HCT116 (cell line): ENCODE measurements at regions of chr16 and their contacts with region 1.

Region 1: DNA sequence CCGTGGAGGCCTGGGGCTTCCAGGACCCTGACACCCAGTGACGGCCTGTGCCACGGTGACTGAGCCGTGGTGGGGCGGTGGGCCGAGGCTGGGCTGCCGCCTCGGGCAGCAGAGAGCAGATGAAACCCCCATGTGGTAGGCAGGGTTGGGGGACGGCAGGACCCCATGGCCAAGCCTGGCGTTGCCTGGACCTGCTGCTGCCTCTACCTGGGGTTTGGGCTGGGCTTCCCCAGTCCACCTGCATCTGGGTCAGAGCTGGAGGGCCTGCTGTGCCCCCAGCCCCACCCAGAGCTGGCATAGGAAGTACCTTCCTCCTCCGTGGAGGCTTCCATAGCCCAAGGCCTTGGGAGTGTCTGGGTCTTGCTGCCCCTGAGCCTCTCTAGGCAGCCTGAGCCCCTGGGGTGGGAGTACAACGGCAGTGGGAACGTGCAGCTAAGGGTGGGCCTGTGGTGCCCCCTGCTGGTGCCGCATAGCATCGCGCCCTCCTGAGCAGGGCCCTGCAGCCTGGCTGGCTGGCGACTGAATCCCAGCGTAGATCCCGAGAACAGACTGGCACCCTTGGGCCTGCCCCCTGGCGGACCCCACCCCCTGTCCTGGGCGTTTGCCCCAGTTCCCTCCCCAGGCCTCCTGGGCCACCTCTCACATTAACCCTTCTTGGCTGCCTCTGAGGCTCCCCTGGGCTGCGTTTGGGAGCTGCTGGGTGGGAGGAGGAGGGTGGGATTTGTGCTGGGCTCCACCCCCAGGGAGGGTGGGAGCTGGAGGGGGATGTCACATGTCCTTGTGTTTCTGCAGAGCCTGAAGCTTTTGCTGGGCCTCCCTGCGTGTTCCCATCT is 12.6 kb upstream of the ATP6V0C start:
- DNase-seq: no peak
- ATAC-seq: peak; percentile 95
- H3K4me3 ChIP-seq: no peak overlapping the region
- H3K27ac ChIP-seq: no peak overlapping the region; the same call in 1 of the 2 replicates
- H3K4me1 ChIP-seq: peaks cover 3 to 12% of the 10 kb centered on the region in 2 experiments; a peak in 3 of 4 replicates
- H3K27me3 ChIP-seq: no peaks in the 10 kb centered on the region
- CTCF ChIP-seq: peak; percentile 85 to 97 (median 95); a peak in 5 of 6 replicates
- POLR2A ChIP-seq: no peak
- RAD21 ChIP-seq: peak; percentile 97

Region 2: DNA sequence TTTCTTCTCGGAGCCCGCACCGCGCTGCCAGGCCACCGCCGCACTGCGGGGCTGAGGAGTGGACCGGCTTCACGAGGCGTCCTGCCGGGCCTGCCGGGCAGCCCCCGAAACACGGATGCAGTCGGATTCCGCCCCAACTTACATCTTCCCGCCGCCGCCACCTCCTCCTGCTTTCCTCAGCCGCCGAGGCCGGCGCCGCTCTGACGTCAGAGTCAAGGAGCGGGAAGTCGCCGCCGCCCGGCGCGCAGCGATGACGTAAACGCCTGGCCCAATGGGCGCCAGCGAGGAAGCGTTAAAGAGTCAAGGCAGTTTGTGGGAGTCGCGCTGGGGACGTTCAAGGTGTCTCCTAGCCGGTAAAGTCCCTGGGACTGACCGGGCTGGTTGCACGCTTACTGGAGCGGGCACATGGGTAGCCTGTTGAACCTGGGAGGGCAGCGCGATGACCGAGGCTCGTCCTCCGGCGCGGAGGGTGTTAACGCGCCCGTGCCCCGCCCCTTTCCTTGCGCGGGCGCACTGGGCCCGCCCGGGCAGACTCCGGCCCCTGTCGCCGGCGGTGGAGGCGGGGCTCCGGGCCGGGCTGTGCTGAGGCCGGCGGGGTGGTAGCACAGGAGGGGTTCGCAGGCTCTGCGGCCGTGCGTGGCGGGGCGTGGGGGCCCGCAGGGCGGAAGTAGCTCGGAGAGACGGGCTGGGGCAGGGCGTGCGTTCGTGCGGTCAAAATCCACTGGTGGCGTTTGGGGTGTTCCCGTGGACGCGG is 233.0 kb before region 1 on chr16 and contains the start of gene RNPS1:
- CTCF ChIA-PET with region 1: interaction called, 5 read pairs
- POLR2A ChIA-PET with region 1: no interaction called
- RAD21 ChIA-PET with region 1: no interaction called
- intact Hi-C with region 1: loop called (anchors 10 kb)
- DNase-seq: peak; percentile 93
- ATAC-seq: peak; percentile 92
- H3K4me3 ChIP-seq: peak within 1 kb of the TSS; percentile 81 to 90
- H3K27ac ChIP-seq: peak within 1 kb of the TSS; percentile 91
- H3K4me1 ChIP-seq: peaks cover 15 to 21% of the 10 kb centered on the region in 2 experiments; a peak in 3 of 4 replicates
- H3K27me3 ChIP-seq: no peaks in the 10 kb centered on the region
- CTCF ChIP-seq: no peak
- POLR2A ChIP-seq: peak; percentile 59
- RAD21 ChIP-seq: no peak
- total RNA-seq, gene RNPS1: 257 TPM

Region 3: DNA sequence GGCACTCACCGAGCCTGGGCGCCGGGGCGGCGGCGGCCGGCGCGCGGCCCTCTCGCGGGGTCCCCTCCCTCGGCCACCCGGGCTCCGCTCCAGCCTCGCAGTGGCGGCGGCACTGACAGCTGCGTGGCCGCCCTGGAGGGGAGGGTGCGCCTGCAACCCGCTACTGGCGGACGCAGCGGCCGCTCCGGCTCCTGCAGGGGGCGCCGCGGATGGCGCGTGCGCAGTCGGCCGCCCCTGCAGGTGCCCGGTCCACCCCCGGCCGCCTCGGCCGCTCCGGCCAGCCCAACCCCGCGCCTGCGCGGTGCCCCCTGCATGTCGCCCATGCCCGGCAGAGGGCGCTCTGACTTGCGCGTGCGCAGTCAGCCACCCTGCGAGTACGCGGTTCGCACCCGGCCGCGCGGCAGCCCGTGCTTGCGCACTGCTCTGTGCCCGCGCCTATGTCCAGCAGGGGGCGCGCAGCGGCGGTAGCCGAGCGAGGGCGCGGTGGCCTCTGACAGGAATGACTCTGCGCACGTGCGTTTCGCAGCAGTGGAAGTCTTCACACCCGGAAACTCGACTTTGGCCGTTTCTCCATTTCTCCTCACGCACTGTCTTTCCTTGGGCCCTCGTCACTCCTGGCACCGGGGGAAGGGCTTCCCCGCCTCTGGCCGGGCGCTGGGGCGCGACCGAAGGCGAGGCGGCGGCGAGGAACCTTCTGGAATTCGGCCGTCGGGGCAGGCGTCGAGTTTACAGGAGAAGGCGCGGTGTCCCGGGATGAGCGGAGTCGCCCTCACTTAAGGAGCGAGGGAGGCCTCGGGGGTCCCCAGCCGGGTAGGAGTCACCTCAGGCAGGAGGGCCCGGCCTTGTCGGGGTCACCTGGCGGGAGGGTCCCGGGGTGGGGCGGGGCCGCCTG is 160.3 kb before region 1 on chr16 and contains the start of gene ABCA3:
- CTCF ChIA-PET with region 1: no interaction called
- POLR2A ChIA-PET with region 1: no interaction called
- RAD21 ChIA-PET with region 1: no interaction called
- intact Hi-C with region 1: loop called (anchors 5 kb)
- DNase-seq: peak; percentile 87
- ATAC-seq: peak; percentile 95
- H3K4me3 ChIP-seq: peak within 1 kb of the TSS; percentile 59 to 70
- H3K27ac ChIP-seq: peak within 1 kb of the TSS; percentile 53; the same call in 1 of the 2 replicates
- H3K4me1 ChIP-seq: peaks cover 0 to 15% of the 10 kb centered on the region in 2 experiments; a peak in 2 of 4 replicates
- H3K27me3 ChIP-seq: no peaks in the 10 kb centered on the region
- CTCF ChIP-seq: peak; percentile 97 to 99 (median 98)
- POLR2A ChIP-seq: peak; percentile 32
- RAD21 ChIP-seq: peak; percentile 78
- total RNA-seq, gene ABCA3: 5.4 TPM

Region 4: GRCh38 chr16:2486645-2487516 is 14.3 kb before region 1 on chr16:
- CTCF ChIA-PET with region 1: no interaction called
- POLR2A ChIA-PET with region 1: no interaction called
- RAD21 ChIA-PET with region 1: no interaction called
- intact Hi-C with region 1: no loop called
- DNase-seq: no peak
- ATAC-seq: no peak
- H3K4me3 ChIP-seq: no peak overlapping the region
- H3K27ac ChIP-seq: no peak overlapping the region
- H3K4me1 ChIP-seq: no peaks in the 10 kb centered on the region
- H3K27me3 ChIP-seq: no peaks in the 10 kb centered on the region
- CTCF ChIP-seq: no peak
- POLR2A ChIP-seq: no peak
- RAD21 ChIP-seq: no peak